ENCODE measurements at regions of chr2 and their contacts with region 1.

Region 1: GRCh38 chr2:61888267-61889055 is at the start of gene CCT4:
- DNase-seq: peak; percentile 86
- H3K4me3 Mint-ChIP-seq: peak within 1 kb of the TSS; percentile 99
- H3K27ac Mint-ChIP-seq: peak within 1 kb of the TSS; percentile 98
- H3K4me1 Mint-ChIP-seq: peaks cover 34% of the 10 kb centered on the region
- H3K27me3 Mint-ChIP-seq: no peaks in the 10 kb centered on the region
- total RNA-seq, gene CCT4: 363 to 377 TPM

Region 2: DNA sequence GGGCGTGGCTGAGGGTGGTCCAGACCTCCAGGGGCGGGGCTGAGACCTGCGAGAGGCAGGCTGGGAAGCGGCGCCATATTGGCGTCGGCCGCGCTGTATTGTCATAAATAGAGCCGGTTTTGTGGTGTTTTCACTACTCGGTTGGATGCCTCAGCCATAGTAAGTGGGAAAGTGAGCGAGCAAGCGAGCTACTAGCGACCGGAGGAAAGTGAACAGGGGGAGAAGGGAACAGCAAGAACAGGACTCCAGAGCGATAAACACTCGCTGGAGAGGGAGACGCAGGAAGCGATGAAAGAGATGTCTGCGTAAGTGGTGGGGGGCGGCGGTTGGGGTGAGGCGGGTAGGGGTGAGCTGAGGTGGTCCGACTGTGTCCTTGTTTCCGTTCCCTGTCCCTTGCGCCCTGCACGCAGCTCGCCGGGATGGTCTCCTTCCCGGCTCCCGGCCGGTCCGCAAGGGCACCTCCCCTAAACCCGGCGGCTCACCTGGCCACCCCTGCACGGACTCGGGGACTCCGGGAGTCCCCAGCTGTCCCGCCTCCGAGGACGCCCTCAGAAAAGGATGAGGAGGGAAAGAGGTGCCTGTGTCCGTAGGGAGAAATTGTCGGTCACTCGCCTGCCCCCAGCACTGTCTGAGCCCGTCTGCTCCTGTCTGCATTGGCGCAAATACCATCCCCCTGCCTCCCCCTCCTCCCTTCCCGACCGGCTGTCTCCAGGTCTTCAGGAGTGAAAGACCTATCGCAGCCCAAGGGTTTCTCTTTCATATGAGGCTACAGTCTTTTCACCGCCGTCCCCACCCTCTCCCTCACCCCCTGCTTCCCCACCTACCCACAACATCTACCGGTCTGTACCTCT is 1132.0 kb before region 1 on chr2 and contains the start of gene PAPOLG:
- CTCF ChIA-PET with region 1: no interaction called
- intact Hi-C with region 1: loop called (anchors 1 kb)
- DNase-seq: peak; percentile 99
- H3K4me3 Mint-ChIP-seq: peak within 1 kb of the TSS; percentile 99
- H3K27ac Mint-ChIP-seq: peak within 1 kb of the TSS; percentile 97
- H3K4me1 Mint-ChIP-seq: peaks cover 40% of the 10 kb centered on the region
- H3K27me3 Mint-ChIP-seq: no peaks in the 10 kb centered on the region
- total RNA-seq, gene PAPOLG: 14.1 to 16.1 TPM

Region 3: DNA sequence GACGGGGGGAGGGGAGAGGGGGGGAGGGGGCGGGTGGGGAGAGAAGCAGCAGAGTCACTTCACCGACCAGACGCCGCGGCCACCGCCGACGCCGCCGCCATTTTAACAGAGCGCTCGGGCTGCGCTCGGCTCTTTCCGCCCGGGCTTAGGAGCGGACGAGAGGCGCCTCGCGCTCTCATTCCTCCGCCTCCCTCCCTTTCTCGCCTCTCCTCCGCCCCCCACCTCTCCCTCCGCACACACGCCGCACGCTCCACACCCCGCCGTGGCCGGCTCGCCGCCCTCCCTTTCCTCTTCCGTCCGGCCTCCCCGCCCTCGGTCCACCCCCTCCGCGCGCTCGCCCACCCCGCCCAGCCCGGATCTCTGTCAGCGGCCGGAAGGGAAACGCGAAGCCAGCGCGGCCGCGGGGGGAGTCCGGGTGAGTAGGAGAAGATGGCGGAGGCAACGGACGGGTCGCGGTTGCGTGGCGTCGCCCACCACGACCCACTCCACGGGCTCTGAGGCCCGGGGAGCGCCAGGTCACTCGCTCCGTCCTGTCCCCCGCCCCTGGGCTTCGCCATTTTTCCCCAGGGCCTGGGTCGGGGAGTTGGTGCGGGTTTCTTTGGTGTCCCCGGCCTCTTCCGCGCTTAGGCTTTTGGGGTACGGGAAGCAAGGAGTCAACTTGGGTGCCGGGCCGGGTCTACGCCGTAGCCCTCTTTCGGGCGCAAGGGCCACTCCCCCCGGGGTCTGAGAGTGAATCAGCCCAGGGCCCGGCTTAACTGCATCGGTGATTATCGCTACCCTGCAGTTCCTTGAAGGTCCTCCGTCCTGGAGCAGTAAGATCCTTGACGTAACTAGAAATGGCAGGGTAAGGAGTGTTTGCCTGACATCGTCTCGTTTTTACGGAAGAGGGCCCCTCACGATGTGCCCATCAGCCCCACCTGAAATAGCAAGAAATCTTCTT is 417.2 kb before region 1 on chr2 and contains the start of gene USP34:
- CTCF ChIA-PET with region 1: no interaction called
- intact Hi-C with region 1: loop called (anchors 1 kb)
- DNase-seq: peak; percentile 94
- H3K4me3 Mint-ChIP-seq: peak within 1 kb of the TSS; percentile 98
- H3K27ac Mint-ChIP-seq: peak within 1 kb of the TSS; percentile 97
- H3K4me1 Mint-ChIP-seq: peaks cover 31% of the 10 kb centered on the region
- H3K27me3 Mint-ChIP-seq: no peaks in the 10 kb centered on the region
- total RNA-seq, gene USP34: 59.5 to 60.4 TPM

Region 4: DNA sequence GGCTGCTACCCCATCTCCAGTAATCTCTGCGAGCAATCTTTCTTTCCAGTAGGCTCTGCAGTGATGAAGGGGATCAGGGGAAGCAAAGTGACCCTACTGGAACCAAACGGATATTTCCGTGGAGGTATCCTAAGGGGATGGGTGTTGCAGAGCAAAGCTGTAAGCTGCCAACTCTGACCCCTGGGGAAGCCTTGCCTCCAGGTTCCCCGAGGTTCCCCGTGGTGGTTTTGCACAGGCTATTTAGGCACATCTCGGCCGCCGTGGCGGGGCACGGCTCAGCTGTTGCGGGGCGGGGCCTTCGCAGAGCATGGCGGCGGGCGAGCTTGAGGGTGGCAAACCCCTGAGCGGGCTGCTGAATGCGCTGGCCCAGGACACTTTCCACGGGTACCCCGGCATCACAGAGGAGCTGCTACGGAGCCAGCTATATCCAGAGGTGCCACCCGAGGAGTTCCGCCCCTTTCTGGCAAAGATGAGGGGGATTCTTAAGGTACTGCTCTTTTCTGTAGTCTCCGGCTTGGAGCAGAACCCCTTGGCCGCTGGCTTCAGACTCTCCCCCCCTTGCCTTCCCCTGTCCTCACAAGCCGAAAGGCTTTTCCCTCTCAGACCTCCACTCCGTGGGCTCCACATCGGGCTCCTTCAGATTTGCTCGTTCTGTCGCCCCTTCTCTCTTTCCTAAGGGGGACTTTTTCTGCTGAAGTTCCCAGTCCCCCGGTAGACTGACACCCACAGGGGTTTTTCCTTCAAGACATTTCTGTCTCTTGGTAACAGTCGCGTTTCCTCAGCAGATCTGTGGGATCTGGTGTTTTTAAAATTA is 17.1 kb after region 1 on chr2 and contains the start of gene COMMD1:
- CTCF ChIA-PET with region 1: no interaction called
- intact Hi-C with region 1: loop called (anchors 1 kb)
- DNase-seq: peak; percentile 92
- H3K4me3 Mint-ChIP-seq: peak within 1 kb of the TSS; percentile 96
- H3K27ac Mint-ChIP-seq: peak within 1 kb of the TSS; percentile 63
- H3K4me1 Mint-ChIP-seq: peaks cover 25% of the 10 kb centered on the region
- H3K27me3 Mint-ChIP-seq: no peaks in the 10 kb centered on the region
- total RNA-seq, gene COMMD1: 26.9 to 29.5 TPM

Region 5: GRCh38 chr2:62195421-62196277 is 307.2 kb after region 1 on chr2 and contains the start of gene B3GNT2:
- CTCF ChIA-PET with region 1: no interaction called
- intact Hi-C with region 1: loop called (anchors 1 kb)
- DNase-seq: peak; percentile 85
- H3K4me3 Mint-ChIP-seq: peak within 1 kb of the TSS; percentile 88
- H3K27ac Mint-ChIP-seq: peak within 1 kb of the TSS; percentile 91
- H3K4me1 Mint-ChIP-seq: peaks cover 22% of the 10 kb centered on the region
- H3K27me3 Mint-ChIP-seq: peaks cover 2% of the 10 kb centered on the region
- total RNA-seq, gene B3GNT2: 31.2 to 33.0 TPM